CD8-positive, alpha-beta T cell (primary cell): ENCODE measurements at regions of chr7 and their contacts with region 1.

Region 1: GRCh38 chr7:129224251-129225205 is at the start of gene AHCYL2:
- DNase-seq: peak; percentile 96 to 99 (median 97)
- ATAC-seq: peak; percentile 87
- H3K4me3 ChIP-seq: peak within 1 kb of the TSS; percentile 71 to 96
- H3K4me3 Mint-ChIP-seq: peak within 1 kb of the TSS; percentile 95
- H3K27ac ChIP-seq: peak within 1 kb of the TSS; percentile 76 to 91
- H3K27ac Mint-ChIP-seq: peak within 1 kb of the TSS; percentile 93
- H3K4me1 ChIP-seq: peaks cover 26% of the 10 kb centered on the region
- H3K4me1 Mint-ChIP-seq: peaks cover 44% of the 10 kb centered on the region
- H3K27me3 ChIP-seq: no peaks in the 10 kb centered on the region
- H3K27me3 Mint-ChIP-seq: no peaks in the 10 kb centered on the region
- CTCF ChIP-seq: no peak
- total RNA-seq, gene AHCYL2: 3.1 to 5.8 TPM

Region 2: GRCh38 chr7:127858091-127858914 is 1366.2 kb before region 1 on chr7:
- CTCF ChIA-PET with region 1: no interaction called
- POLR2A ChIA-PET with region 1: no interaction called
- intact Hi-C with region 1: loop called in 1 of 2 experiments (anchors 5 kb)
- DNase-seq: no peak
- ATAC-seq: no peak
- H3K4me3 ChIP-seq: no peak overlapping the region
- H3K4me3 Mint-ChIP-seq: no peak overlapping the region
- H3K27ac ChIP-seq: no peak overlapping the region
- H3K27ac Mint-ChIP-seq: no peak overlapping the region
- H3K4me1 ChIP-seq: peaks cover 42% of the 10 kb centered on the region
- H3K4me1 Mint-ChIP-seq: peaks cover 48% of the 10 kb centered on the region
- H3K27me3 ChIP-seq: peaks cover 0 to 3% of the 10 kb centered on the region in 2 experiments
- H3K27me3 Mint-ChIP-seq: peaks cover 14% of the 10 kb centered on the region
- CTCF ChIP-seq: no peak

Region 3: DNA sequence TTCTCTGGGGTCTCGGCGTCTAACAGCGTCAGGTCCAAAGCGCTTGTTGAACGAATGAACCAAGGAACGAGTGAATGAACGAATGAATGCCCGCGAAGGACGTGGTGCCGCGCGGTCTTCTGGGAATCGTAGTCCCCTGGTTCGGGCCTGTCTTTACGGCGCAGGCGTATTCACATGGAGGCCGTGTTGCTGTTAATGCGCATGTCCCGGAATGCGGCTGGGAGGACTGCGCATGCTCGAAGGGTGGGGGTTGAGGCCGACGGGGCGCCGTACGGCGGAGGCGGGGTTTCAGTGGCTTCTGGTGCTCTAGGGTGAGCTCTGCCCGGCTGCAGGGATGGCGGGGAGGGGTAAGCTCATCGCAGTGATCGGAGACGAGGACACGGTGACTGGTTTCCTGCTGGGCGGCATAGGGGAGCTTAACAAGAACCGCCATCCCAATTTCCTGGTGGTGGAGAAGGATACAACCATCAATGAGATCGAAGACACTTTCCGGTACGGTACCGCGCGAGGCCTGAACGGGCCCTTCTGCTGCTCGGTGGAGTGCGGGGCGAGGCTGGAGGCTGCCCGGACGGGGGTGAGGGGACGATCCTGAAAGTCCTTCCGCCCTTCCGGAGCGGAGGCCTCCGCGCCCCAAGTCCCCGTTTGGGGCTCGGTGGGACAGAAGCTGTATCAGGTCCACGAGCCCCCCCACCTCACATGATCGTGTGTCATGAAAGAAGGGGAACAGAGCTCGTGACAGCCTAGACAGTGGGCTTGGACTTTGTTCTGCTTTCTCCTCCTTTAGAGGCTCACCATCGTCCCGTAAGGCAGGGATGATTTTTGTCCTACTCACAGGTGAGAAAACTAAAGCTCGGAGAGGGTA is 361.7 kb before region 1 on chr7 and contains the start of gene ATP6V1F:
- CTCF ChIA-PET with region 1: no interaction called
- POLR2A ChIA-PET with region 1: no interaction called
- intact Hi-C with region 1: loop called (anchors 2 to 5 kb)
- DNase-seq: peak; percentile 97 to 100 (median 99)
- ATAC-seq: peak; percentile 87
- H3K4me3 ChIP-seq: peak within 1 kb of the TSS; percentile 80 to 92
- H3K4me3 Mint-ChIP-seq: peak within 1 kb of the TSS; percentile 96
- H3K27ac ChIP-seq: peak within 1 kb of the TSS; percentile 71 to 74
- H3K27ac Mint-ChIP-seq: peak within 1 kb of the TSS; percentile 94
- H3K4me1 ChIP-seq: peaks cover 17% of the 10 kb centered on the region
- H3K4me1 Mint-ChIP-seq: peaks cover 34% of the 10 kb centered on the region
- H3K27me3 ChIP-seq: no peaks in the 10 kb centered on the region
- H3K27me3 Mint-ChIP-seq: no peaks in the 10 kb centered on the region
- CTCF ChIP-seq: no peak
- total RNA-seq, gene ATP6V1F: 54.8 to 59.3 TPM

Region 4: DNA sequence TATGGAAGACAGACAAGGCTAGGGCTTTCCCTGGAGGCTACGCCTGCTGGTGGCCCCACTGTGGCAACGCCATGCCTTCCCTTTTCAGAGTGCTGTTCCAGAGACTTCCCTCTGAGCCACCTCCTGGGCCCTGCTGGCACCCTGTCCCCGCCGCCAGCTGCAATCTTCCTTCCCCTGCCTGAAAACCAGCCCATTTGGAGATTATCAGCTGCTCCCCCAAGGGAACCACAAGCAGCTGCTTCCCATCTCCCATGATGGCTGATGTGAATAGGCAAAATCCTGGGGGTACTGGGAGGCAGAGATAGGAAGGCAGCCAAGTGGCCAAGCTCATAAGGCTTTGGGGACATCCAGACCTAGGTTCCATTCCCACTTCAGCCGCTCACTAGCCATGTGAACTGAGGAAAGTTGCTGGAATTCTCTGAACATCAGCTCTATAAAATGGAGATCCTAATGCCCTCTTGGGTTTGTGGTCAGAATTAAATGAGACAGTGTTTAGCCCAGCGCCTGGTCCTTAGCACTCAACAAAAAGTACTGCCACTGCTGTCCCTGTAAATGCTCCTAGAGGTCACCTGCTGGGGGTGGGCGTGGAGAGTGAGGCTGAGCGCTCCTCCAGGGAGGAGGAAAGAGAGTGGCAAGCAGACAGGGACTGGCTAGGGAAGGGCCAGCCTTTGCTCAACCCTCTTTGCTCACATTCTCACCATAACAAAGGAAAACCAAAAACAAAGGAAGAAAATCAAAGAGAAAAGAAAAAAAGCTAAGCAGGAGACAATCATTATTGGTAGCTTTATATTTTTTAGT is 74.1 kb before region 1 on chr7:
- CTCF ChIA-PET with region 1: no interaction called
- POLR2A ChIA-PET with region 1: no interaction called
- intact Hi-C with region 1: no loop called
- DNase-seq: no peak
- ATAC-seq: no peak
- H3K4me3 ChIP-seq: no peak overlapping the region
- H3K4me3 Mint-ChIP-seq: no peak overlapping the region
- H3K27ac ChIP-seq: no peak overlapping the region
- H3K27ac Mint-ChIP-seq: no peak overlapping the region
- H3K4me1 ChIP-seq: peaks cover 7% of the 10 kb centered on the region
- H3K4me1 Mint-ChIP-seq: peaks cover 8% of the 10 kb centered on the region
- H3K27me3 ChIP-seq: no peaks in the 10 kb centered on the region
- H3K27me3 Mint-ChIP-seq: no peaks in the 10 kb centered on the region
- CTCF ChIP-seq: no peak

Region 5: GRCh38 chr7:129271500-129272355 is 47.2 kb after region 1 on chr7:
- CTCF ChIA-PET with region 1: interaction called, 266 read pairs
- POLR2A ChIA-PET with region 1: interaction called, 6 read pairs
- intact Hi-C with region 1: no loop called
- DNase-seq: peak; percentile 35 to 86 (median 67)
- ATAC-seq: peak; percentile 100
- H3K4me3 ChIP-seq: no peak overlapping the region
- H3K4me3 Mint-ChIP-seq: peak overlapping the region; percentile 72
- H3K27ac ChIP-seq: no peak overlapping the region
- H3K27ac Mint-ChIP-seq: no peak overlapping the region
- H3K4me1 ChIP-seq: no peaks in the 10 kb centered on the region
- H3K4me1 Mint-ChIP-seq: peaks cover 6% of the 10 kb centered on the region
- H3K27me3 ChIP-seq: no peaks in the 10 kb centered on the region
- H3K27me3 Mint-ChIP-seq: no peaks in the 10 kb centered on the region
- CTCF ChIP-seq: peak; percentile 78

Region 6: GRCh38 chr7:129433847-129434674 is 209.5 kb after region 1 on chr7 and contains the start of gene STRIP2:
- CTCF ChIA-PET with region 1: no interaction called
- POLR2A ChIA-PET with region 1: no interaction called
- intact Hi-C with region 1: loop called (anchors 1 to 2 kb)
- DNase-seq: peak; percentile 73 to 92 (median 90)
- ATAC-seq: peak; percentile 95
- H3K4me3 ChIP-seq: peak within 1 kb of the TSS; percentile 91 to 93
- H3K4me3 Mint-ChIP-seq: peak within 1 kb of the TSS; percentile 94
- H3K27ac ChIP-seq: no peak within 1 kb of the TSS
- H3K27ac Mint-ChIP-seq: peak within 1 kb of the TSS; percentile 46
- H3K4me1 ChIP-seq: peaks cover 12% of the 10 kb centered on the region
- H3K4me1 Mint-ChIP-seq: peaks cover 20% of the 10 kb centered on the region
- H3K27me3 ChIP-seq: peaks cover 0 to 8% of the 10 kb centered on the region in 2 experiments
- H3K27me3 Mint-ChIP-seq: peaks cover 29% of the 10 kb centered on the region
- CTCF ChIP-seq: no peak
- total RNA-seq, gene STRIP2: 0.19 TPM in 1 of 2 experiments, not detected in the other

Region 7: DNA sequence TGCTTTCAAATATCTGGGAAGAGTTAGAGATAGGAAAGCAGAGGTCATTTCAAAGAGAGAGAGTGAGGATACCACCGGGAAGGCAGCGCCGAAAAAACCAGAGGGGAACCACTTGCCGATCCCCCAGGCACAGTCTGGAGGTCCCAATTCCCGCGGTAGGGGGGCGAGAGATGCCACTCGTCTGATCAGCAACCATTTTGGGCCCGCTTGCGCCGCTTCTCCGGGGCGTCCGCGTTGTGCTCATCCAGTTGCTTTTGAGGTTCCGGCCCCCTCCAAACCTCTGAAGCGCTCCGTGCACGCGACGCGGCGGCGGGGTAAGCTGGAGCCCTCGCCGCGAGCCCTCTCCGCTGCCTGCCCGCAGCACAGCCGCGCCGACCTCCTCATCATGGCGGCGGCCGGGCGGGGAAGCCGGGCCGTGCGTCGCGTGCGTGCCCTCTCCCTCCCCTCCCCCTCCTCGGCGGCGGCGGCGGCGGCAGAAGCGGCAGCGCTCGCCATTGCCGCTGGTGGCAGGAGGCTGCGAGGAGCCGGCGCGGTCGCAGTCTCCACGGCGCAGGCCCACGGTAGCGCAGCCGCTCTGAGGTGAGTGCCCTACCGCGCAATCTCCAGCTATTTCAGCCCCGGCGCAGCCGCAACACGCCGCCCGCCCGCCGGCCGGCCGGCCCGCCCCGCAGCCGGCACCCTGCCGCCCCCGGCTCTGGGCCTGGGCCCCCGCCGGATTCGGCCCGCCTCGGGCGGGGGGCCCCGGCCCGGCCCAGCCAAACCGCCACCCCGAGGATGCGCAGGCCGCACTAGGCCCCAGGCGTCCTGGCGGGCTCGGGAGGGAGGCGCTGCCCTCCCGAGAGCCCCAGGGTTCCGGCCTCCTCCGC is 387.0 kb after region 1 on chr7 and contains the start of gene NRF1:
- CTCF ChIA-PET with region 1: no interaction called
- POLR2A ChIA-PET with region 1: no interaction called
- intact Hi-C with region 1: loop called in 1 of 2 experiments (anchors 2 kb)
- DNase-seq: peak; percentile 82 to 97 (median 91)
- ATAC-seq: peak; percentile 87
- H3K4me3 ChIP-seq: peak within 1 kb of the TSS; percentile 87 to 91
- H3K4me3 Mint-ChIP-seq: peak within 1 kb of the TSS; percentile 97
- H3K27ac ChIP-seq: peak within 1 kb of the TSS; percentile 68 to 85
- H3K27ac Mint-ChIP-seq: peak within 1 kb of the TSS; percentile 96
- H3K4me1 ChIP-seq: peaks cover 40% of the 10 kb centered on the region
- H3K4me1 Mint-ChIP-seq: peaks cover 67% of the 10 kb centered on the region
- H3K27me3 ChIP-seq: no peaks in the 10 kb centered on the region
- H3K27me3 Mint-ChIP-seq: no peaks in the 10 kb centered on the region
- CTCF ChIP-seq: no peak
- total RNA-seq, gene NRF1: 31.9 to 34.9 TPM